BJ (cell line): ENCODE measurements at regions of chr5 and their contacts with region 1.

Region 1: DNA sequence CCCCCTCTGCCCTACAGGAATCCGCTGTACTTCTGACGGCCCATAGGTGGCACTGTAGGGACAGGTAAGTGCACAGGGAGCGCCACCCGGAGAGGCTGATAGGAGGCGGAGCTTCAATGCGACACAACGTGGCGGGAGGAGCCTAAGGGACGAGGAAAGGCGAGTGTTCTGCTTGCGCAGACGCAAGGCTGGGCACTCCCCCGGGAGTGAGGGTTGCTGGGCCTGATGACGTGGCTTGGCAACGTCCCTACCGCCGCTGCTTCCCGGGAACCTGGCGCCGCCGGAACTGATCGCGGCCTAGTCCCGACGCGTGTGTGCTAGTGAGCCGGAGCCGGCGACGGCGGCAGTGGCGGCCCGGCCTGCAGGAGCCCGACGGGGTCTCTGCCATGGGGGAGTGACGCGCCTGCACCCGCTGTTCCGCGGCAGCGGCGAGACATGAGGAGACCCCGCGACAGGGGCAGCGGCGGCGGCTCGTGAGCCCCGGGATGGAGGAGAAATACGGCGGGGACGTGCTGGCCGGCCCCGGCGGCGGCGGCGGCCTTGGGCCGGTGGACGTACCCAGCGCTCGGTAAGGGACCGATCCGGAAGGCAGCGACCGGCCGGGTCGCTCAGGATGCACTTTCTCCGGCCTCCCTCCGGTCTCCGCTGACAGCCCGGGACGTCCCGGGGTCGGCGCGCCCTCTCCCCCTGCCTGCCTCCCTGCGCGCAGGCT is at the start of gene SLC30A5:
- DNase-seq: peak; percentile 99
- H3K4me3 ChIP-seq: peak within 1 kb of the TSS; percentile 70
- H3K27me3 ChIP-seq: no peaks in the 10 kb centered on the region
- CTCF ChIP-seq: peak; percentile 93
- polyA plus RNA-seq, gene SLC30A5: 45.8 and 47.4 TPM in 2 replicates

Region 2: GRCh38 chr5:69372394-69372793 is 278.5 kb after region 1 on chr5:
- CTCF ChIA-PET with region 1: interaction called, 10 read pairs
- POLR2A ChIA-PET with region 1: no interaction called
- DNase-seq: no peak
- H3K4me3 ChIP-seq: no peak overlapping the region
- H3K27me3 ChIP-seq: no peaks in the 10 kb centered on the region
- CTCF ChIP-seq: no peak